ENCODE measurements at regions of chr4 and their contacts with region 1.

Region 1: GRCh38 chr4:73258686-73259570 is at the start of gene ANKRD17:
- DNase-seq: peak; percentile 98
- H3K4me3 Mint-ChIP-seq: peak within 1 kb of the TSS; percentile 97
- H3K27ac Mint-ChIP-seq: peak within 1 kb of the TSS; percentile 98
- H3K4me1 Mint-ChIP-seq: peaks cover 40% of the 10 kb centered on the region
- H3K27me3 Mint-ChIP-seq: no peaks in the 10 kb centered on the region
- total RNA-seq, gene ANKRD17: 67.4 and 76.5 TPM in 2 replicates

Region 2: DNA sequence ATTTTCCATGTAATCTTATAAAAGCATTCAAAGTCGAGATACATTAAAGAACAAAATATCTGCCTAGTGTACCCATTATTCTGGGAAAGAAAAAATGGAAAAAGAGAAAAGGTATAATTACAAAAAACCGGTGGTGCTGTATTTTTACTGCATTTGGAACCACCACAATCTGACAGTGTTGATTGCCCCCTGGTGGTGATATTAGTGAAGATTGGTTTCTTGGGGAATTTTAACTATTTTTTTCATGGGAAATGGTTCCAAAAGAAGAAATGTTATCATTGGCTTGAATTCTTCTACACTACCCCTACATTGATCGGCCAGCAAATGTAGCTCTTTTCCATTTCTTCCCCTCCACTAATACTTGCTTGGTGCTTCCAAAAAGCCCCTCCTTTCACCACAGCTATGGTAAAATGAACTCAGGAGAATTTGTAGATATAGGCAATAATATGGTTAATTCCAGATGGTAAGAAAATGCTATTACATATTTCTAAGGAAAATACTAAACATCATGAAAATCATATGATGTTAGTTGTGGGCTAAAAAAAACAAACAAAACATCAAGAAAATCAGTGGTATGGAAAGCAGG is 239.4 kb before region 1 on chr4:
- intact Hi-C with region 1: loop called (anchors 5 kb)
- DNase-seq: peak; percentile 70
- H3K4me3 Mint-ChIP-seq: no peak overlapping the region
- H3K27ac Mint-ChIP-seq: no peak overlapping the region
- H3K4me1 Mint-ChIP-seq: no peaks in the 10 kb centered on the region
- H3K27me3 Mint-ChIP-seq: peaks cover 11% of the 10 kb centered on the region

Region 3: DNA sequence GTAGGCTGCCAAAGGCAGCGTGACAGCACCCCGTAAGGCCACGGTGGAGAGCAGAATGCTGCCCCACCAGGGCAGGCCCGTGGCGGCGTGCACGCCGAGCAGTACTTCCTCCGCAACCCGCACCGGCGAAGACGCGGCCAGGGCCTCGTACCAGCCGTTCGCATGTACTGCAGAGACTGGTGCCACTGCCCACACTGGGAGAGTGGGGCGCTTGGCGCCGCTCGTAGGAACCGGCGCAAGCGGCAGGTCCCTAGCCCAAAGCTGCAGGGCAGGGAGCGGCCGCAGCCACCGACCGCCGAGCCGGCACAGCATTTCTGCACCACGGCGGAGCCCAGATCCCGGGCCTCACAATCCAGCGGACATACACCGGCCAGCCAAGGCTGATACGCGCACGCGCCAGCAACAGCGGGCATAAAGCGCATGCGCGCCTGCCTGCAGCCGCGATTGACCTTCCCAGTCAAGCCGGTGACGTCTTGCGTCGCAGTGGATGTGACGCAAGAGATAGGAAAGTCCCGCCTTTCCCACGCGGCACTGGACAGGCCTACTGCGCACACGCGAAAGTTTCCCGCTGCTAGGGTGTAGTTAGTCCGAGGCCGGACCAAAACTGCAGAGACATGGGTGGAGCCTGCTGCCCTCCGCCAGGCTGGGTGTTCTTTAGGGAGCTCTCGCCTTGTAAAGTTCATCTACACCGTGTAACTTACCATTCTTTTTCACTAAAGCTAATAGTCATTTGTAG is 189.4 kb before region 1 on chr4 and contains the start of gene COX18:
- intact Hi-C with region 1: loop called (anchors 1 kb)
- DNase-seq: peak; percentile 99
- H3K4me3 Mint-ChIP-seq: peak within 1 kb of the TSS; percentile 89
- H3K27ac Mint-ChIP-seq: peak within 1 kb of the TSS; percentile 94
- H3K4me1 Mint-ChIP-seq: peaks cover 33% of the 10 kb centered on the region
- H3K27me3 Mint-ChIP-seq: no peaks in the 10 kb centered on the region
- total RNA-seq, gene COX18: 21.2 and 22.2 TPM in 2 replicates

Region 4: DNA sequence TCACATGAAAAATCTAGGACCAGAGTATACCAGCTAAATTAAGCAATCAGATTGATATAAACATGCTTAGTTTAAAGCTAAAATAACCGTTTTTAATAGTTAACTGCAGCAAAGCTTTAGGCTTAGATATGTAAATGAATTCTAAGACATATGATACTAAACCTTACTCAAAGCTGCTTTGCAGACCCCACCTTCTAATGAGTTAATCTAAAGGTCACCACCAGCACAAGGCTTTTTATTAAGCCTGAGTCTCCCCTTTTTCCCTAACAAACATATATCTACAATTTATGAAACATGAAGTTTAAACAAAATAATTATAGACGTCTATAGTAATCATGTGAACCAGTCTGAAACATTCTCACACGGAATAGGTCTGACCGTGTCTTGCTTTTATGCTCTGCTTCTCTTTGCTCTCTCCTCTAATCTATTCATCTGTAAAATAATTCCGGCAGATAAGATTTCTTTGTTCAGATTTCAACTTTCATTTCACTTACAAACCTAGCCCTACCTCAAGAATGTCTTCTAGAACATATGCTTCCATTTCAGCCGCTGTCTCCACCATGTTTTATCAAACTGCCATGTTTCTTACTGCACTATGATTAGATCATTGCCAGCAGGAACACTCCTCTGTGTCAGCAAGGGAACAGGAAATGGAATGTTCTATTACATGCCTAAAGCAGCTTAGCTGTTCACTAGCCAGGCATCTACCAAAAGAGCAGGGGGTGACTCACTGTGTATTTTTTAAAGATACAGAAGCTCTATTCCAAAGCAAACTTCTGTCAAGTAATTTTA is 36.3 kb before region 1 on chr4:
- intact Hi-C with region 1: loop called (anchors 1 kb)
- DNase-seq: peak; percentile 89
- H3K4me3 Mint-ChIP-seq: no peak overlapping the region
- H3K27ac Mint-ChIP-seq: no peak overlapping the region
- H3K4me1 Mint-ChIP-seq: peaks cover 22% of the 10 kb centered on the region
- H3K27me3 Mint-ChIP-seq: no peaks in the 10 kb centered on the region

Measured in activated CD4-positive, alpha-beta T cell treated with anti-CD3 and anti-CD28 coated beads, Interleukin-2, amount 10 ng/mL, durations not matched to agents 24 days and 14 days (primary cell).